A673 (cell line): ENCODE measurements at regions of chr7 and their contacts with region 1.

Region 1: GRCh38 chr7:134639127-134639526 is 7.5 kb upstream of the BPGM start:
- DNase-seq: no peak
- H3K4me3 ChIP-seq: no peak overlapping the region
- H3K27ac ChIP-seq: no peak overlapping the region
- H3K4me1 ChIP-seq: no peaks in the 10 kb centered on the region
- H3K27me3 ChIP-seq: peaks cover 12% of the 10 kb centered on the region
- CTCF ChIP-seq: no peak

Region 2: GRCh38 chr7:134831862-134832261 is 192.7 kb after region 1 on chr7:
- CTCF ChIA-PET with region 1: no interaction called
- POLR2A ChIA-PET with region 1: no interaction called
- intact Hi-C with region 1: no loop called
- DNase-seq: no peak
- H3K4me3 ChIP-seq: no peak overlapping the region
- H3K27ac ChIP-seq: no peak overlapping the region
- H3K4me1 ChIP-seq: peaks cover 5% of the 10 kb centered on the region
- H3K27me3 ChIP-seq: no peaks in the 10 kb centered on the region
- CTCF ChIP-seq: no peak

Region 3: DNA sequence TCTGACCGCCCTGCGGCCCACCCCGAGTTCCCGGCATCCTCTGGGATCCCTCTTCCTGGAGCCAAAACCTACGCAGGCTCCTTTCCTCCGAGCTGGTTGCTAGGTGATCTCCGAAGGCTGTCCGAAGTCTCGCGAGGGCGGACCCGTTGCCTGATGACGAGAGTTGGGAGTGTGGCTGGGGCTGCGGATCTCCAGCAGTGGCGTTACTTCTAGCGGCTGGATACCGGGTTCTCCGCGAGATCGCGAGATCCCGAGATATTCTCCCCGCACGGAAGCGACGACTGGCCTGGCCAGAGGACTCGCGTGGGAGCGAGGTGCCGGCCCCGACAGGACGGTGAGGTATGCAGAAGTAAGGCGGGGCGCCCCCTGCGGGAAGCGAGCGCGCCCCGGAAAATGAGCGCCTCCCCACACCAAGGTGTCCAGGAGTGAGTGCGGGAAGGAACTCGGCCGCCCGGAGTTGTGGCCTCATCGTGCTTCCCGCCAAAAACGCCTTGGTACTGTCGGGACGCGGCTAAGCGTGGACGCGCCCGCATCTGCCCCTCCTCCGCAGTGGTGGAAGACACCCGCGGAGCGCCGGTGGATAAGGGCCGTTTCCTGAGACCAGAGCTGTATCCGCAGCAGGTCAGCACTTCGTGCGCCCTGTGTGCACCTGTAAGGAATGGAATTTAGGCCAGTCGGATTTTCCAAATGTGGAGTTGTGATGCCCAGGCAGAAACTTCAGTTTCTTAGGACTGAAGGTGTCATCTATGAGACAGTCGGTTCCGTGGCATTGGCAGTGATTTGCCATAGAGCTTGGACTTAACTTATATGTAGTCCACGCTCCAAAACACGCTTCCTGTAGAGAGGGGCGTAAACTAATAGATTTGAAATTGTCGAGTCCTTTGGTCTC is 347.5 kb after region 1 on chr7 and contains the start of gene AGBL3:
- CTCF ChIA-PET with region 1: no interaction called
- POLR2A ChIA-PET with region 1: interaction called, 12 read pairs
- intact Hi-C with region 1: no loop called
- DNase-seq: peak; percentile 98
- H3K4me3 ChIP-seq: peak within 1 kb of the TSS; percentile 71
- H3K27ac ChIP-seq: peak within 1 kb of the TSS; percentile 88
- H3K4me1 ChIP-seq: peaks cover 17% of the 10 kb centered on the region
- H3K27me3 ChIP-seq: no peaks in the 10 kb centered on the region
- CTCF ChIP-seq: peak; percentile 74
- total RNA-seq, gene AGBL3: 2.4 and 2.9 TPM in 2 replicates